MCF 10A (cell line): ENCODE measurements at regions of chr5 and their contacts with region 1.

Region 1: DNA sequence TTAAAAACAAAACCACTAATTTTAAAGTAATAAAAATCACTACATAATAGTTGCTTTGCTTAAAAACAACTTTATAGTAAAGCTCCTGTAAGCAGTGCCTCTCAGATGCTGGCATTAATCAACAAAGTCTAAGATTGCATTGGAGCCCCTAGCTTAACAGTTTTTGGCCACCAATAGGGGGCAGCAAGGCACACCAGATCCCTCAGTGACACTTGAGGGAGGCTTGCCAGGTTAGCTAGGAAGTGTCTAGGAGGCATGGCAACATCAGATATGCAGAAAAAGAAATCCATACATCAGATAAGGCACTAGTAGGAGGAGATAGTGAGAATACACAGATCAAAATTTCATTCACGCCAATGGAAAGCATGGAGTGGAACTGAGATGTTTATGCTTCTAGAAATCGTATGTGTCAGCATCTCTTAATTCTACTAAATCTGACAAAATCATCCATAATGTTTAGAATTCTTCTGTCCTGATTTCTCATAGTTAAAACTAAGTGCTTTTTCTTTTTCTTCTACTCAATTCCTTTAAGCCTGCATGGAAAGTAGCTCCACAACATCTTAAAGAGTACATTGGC is 73.6 kb upstream of the PAM start:
- DNase-seq: peak; percentile 86
- H3K4me3 Mint-ChIP-seq: no peak overlapping the region
- H3K27ac Mint-ChIP-seq: no peak overlapping the region
- H3K4me1 Mint-ChIP-seq: peaks cover 6% of the 10 kb centered on the region
- H3K27me3 Mint-ChIP-seq: no peaks in the 10 kb centered on the region
- CTCF ChIP-seq: peak; percentile 75

Region 2: DNA sequence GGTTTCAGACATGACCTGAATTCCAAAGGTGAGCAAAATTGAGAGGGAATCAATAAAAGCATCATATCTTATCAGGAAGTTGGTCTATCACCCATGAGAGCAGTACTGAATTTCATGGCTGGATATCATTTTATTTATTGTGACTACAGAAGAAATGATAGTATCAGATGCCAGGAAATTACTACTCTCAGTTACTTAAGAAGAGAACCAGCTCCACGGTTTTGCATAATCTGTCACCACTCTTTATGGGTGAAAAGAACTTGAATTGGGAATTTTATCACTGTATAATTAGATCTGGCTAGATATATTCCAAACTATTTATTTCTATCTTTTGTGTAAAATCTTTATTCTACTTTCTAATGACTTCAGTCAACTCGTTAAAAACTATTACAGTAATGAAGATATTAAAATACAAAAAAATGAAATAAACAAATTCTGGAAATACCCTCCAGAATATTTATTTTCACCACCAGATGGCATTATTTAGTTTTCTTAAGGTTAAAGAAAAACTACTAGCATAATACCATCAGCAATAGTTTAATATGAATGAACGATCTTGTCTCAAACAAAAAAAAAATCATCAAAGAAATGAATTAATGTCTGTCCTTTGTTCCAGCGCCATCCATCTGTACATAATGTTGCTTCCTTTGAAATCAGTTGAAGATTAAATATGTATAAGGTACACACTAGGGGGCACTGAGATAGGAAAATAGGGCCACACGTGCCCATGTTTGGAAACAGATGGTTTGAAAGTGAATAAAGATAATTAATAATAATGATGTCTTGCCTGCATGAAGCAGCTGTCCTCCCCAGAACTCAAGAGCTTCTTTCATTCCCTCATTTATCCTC is 98.0 kb before region 1 on chr5:
- CTCF ChIA-PET with region 1: interaction called, 10 read pairs
- POLR2A ChIA-PET with region 1: no interaction called
- intact Hi-C with region 1: loop called (anchors 5 kb)
- DNase-seq: peak; percentile 35
- H3K4me3 Mint-ChIP-seq: no peak overlapping the region
- H3K27ac Mint-ChIP-seq: no peak overlapping the region
- H3K4me1 Mint-ChIP-seq: no peaks in the 10 kb centered on the region
- H3K27me3 Mint-ChIP-seq: no peaks in the 10 kb centered on the region
- CTCF ChIP-seq: peak; percentile 50

Region 3: DNA sequence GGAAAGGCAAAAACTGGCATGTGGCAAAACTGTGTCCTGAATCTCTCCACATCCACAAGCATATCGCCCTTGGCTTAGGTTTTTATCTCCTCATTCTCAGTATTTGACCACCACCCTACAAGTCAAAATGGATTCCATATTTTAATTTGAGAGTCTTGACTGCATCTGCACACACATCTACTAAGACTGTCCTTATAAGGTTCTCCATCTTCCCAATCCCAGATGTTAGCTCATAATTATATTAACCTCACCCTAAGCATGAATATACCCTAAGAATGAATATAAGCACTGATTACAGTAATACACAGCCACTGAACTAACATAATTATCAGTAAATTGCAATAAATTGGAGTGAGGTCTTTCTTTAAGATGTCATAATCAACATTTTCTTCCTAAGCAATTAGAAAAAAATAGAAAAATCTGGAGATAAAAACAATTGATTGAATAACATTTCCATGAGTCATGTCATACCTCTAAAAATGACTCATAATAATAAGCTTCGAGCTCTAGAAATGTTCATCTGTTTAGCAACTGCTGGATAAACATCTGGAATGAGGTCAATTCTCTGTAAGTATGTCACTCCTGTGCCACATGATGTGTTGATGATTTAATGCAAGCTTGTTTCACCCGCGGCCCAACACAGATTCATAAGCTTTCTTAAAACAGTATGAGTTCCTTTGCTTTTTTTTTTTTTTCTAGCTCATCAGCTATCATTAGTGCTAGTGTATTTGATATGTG is 33.8 kb after region 1 on chr5:
- CTCF ChIA-PET with region 1: interaction called, 11 read pairs
- POLR2A ChIA-PET with region 1: interaction called, 4 read pairs
- intact Hi-C with region 1: no loop called
- DNase-seq: peak; percentile 71
- H3K4me3 Mint-ChIP-seq: no peak overlapping the region
- H3K27ac Mint-ChIP-seq: peak overlapping the region; percentile 80
- H3K4me1 Mint-ChIP-seq: peaks cover 25% of the 10 kb centered on the region
- H3K27me3 Mint-ChIP-seq: no peaks in the 10 kb centered on the region
- CTCF ChIP-seq: no peak

Region 4: DNA sequence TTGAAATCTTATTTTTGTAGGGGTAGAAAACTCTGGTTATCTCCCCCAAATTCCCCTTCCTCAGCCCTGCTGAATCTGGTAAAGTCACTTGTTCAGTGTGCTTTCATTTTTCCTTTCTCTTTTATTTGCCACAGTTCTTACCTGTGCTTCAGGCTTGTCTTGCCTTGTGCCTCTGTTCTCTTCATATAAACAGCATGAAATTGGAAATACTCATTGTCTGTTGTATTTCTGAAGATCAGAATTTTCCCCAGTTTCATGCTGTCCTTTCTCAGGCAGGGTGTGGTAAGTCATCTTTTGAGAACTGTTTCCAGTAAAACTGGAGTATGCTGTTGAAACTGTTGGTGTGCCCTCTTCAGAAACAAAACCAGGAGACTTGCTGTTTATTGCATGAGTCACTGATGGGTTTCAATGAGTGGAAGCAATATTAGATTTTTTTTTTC is 80.6 kb after region 1 on chr5:
- CTCF ChIA-PET with region 1: interaction called, 16 read pairs
- POLR2A ChIA-PET with region 1: interaction called, 3 read pairs
- intact Hi-C with region 1: no loop called
- DNase-seq: peak; percentile 69
- H3K4me3 Mint-ChIP-seq: peak overlapping the region; percentile 66
- H3K27ac Mint-ChIP-seq: peak overlapping the region; percentile 81
- H3K4me1 Mint-ChIP-seq: peaks cover 46% of the 10 kb centered on the region
- H3K27me3 Mint-ChIP-seq: no peaks in the 10 kb centered on the region
- CTCF ChIP-seq: no peak

Region 5: GRCh38 chr5:102792705-102793104 is 111.2 kb after region 1 on chr5:
- CTCF ChIA-PET with region 1: interaction called, 10 read pairs
- POLR2A ChIA-PET with region 1: no interaction called
- intact Hi-C with region 1: no loop called
- DNase-seq: peak; percentile 34
- H3K4me3 Mint-ChIP-seq: no peak overlapping the region
- H3K27ac Mint-ChIP-seq: no peak overlapping the region
- H3K4me1 Mint-ChIP-seq: peaks cover 5% of the 10 kb centered on the region
- H3K27me3 Mint-ChIP-seq: no peaks in the 10 kb centered on the region
- CTCF ChIP-seq: peak; percentile 31

Region 6: DNA sequence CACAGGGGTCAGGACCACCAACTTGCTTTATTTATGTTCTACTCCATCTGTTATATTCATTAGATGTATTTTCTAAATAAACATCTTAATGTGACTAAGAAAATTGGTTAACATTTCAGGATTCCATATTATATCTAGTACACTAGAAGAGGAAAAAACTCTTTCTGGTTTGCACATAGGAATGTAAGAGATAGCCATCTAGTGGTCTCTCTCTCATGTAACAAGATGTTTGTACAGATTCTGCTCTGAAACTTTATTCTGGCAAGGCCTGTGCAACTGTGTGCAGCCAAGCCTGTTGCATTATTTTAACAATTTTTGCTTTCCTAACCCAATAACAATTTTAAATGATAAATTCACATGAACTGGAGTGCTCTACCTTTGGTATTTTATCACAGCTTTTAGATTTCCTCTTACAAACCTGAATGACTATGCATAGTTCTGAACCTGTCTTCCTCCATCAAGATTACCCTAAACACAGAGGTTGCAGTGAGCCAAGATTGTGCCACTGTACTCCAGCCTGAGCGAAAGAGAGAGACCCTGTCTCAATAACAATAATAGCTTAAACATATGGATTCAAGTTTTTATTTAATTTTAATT is 290.3 kb after region 1 on chr5:
- CTCF ChIA-PET with region 1: interaction called, 27 read pairs
- POLR2A ChIA-PET with region 1: interaction called, 3 read pairs
- intact Hi-C with region 1: no loop called
- DNase-seq: peak; percentile 11
- H3K4me3 Mint-ChIP-seq: no peak overlapping the region
- H3K27ac Mint-ChIP-seq: no peak overlapping the region
- H3K4me1 Mint-ChIP-seq: no peaks in the 10 kb centered on the region
- H3K27me3 Mint-ChIP-seq: no peaks in the 10 kb centered on the region
- CTCF ChIP-seq: peak; percentile 32

Region 7: GRCh38 chr5:103139264-103139865 is 457.9 kb after region 1 on chr5:
- CTCF ChIA-PET with region 1: interaction called, 5 read pairs
- POLR2A ChIA-PET with region 1: no interaction called
- intact Hi-C with region 1: loop called (anchors 5 kb)
- DNase-seq: peak; percentile 87
- H3K4me3 Mint-ChIP-seq: no peak overlapping the region
- H3K27ac Mint-ChIP-seq: no peak overlapping the region
- H3K4me1 Mint-ChIP-seq: no peaks in the 10 kb centered on the region
- H3K27me3 Mint-ChIP-seq: no peaks in the 10 kb centered on the region
- CTCF ChIP-seq: peak; percentile 95